ENCODE measurements at regions of chr6 and their contacts with region 1.

Region 1: DNA sequence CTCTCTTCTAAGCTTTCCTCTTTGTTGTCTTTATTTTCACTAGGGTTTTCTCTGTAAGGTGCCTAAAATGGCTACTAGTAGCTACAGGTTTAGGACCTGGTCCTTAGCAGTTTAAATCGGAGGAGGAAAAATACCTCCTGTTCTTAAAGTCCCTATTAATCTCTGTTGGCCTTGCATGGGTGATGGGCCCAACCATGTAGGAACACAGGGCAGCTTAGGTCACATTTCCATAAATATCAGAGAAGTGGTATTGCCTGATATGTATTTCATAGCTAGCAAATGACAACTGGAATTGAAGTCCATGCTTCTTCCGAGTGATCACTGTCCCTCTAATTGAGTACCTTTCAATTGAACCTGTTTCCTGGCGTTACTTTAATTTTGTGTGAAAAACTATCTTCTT is 70.0 kb downstream of the LAMA2 start:
- DNase-seq: no peak
- ATAC-seq: no peak

Region 2: DNA sequence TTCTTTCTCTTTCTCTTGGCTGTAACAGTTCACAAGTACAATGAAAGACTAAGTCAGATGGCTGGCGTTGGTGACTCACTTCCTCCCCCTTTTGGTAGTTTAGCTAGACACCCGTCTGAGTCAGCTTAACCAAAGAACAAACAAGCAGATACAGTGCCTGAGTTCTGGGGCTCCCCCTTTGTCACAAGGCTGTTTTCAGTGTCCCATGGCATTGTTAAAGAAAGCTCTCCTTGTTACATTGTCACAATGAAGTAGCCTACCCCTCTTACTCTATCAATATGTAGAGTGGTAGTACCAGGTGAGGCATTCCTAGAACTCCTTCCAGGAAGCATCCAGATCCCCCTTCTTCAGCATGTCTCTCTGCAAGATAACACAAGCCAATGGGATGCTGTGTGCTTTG is 1532.3 kb before region 1 on chr6:
- intact Hi-C with region 1: loop called (anchors 5 kb)
- DNase-seq: peak; percentile 65
- ATAC-seq: peak; percentile 84

Region 3: GRCh38 chr6:129006724-129007514 is 54.0 kb after region 1 on chr6:
- intact Hi-C with region 1: no loop called
- DNase-seq: no peak
- ATAC-seq: no peak